Heart left ventricle (tissue), 16 donors: ENCODE measurements at regions of chr14 and their contacts with region 1.

Region 1: DNA sequence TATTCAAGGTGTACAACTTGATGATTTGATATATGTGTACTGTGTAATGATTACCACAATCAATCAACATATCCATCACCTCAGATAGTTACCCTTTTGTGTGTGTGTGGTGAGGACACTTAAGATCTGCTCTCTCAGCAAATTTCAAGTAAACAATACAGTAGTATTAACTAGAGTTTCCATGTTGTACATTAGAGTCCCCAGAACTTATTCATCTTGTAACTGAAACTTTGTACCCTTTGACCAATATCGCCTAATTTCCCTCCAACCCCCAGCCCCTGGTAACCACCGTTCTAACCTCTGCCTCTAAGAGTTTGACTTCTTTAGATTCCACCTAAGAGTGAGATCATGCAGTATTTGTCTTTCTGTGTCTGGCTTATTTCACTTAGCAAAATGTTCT is 12.1 kb downstream of the ADCK1 start:
- DNase-seq: no peak
- ATAC-seq: no peak
- H3K4me3 ChIP-seq: no peak overlapping the region
- H3K27ac ChIP-seq: no peak overlapping the region
- H3K4me1 ChIP-seq: no peaks in the 10 kb centered on the region
- H3K27me3 ChIP-seq: no peaks in the 10 kb centered on the region
- CTCF ChIP-seq: no peak
- POLR2A ChIP-seq: no peak

Region 2: DNA sequence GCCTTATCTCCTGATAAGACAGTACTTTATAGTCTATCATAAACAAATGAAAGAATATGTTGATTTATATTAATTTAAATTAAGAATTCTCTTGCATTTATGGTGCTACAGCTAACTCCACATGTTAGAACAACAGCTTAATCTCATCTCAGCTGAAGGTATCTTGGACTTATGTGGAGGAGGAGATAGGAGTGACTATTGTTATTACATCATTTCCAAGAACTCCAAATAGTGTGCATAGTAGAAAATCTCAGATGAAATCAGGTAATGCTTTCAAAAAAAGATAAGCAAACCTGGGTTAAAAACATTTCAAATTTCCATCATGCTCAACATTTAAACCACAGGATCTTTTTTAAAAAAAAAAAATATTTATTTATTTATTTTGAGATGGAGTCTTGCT is 282.1 kb before region 1 on chr14:
- intact Hi-C with region 1: no loop called
- DNase-seq: no peak
- ATAC-seq: no peak
- H3K4me3 ChIP-seq: no peak overlapping the region
- H3K27ac ChIP-seq: no peak overlapping the region
- H3K4me1 ChIP-seq: peaks cover 0 to 4% (median 0%) of the 10 kb centered on the region in 12 donors
- H3K27me3 ChIP-seq: no peaks in the 10 kb centered on the region
- CTCF ChIP-seq: no peak
- POLR2A ChIP-seq: no peak

Region 3: GRCh38 chr14:77659831-77660230 is 152.2 kb before region 1 on chr14:
- intact Hi-C with region 1: loop called in 3 of 10 experiments (anchors 2 to 10 kb)
- DNase-seq: no peak
- ATAC-seq: peak in 2 of 4 donors; percentile 31
- H3K4me3 ChIP-seq: no peak overlapping the region
- H3K27ac ChIP-seq: peak overlapping the region in 1 of 12 donors; percentile 88
- H3K4me1 ChIP-seq: peaks cover 0 to 43% (median 0%) of the 10 kb centered on the region in 12 donors
- H3K27me3 ChIP-seq: no peaks in the 10 kb centered on the region
- CTCF ChIP-seq: no peak
- POLR2A ChIP-seq: no peak

Region 4: GRCh38 chr14:77790566-77791224 is 21.3 kb before region 1 on chr14:
- intact Hi-C with region 1: loop called in 1 of 10 experiments (anchors 1 kb)
- DNase-seq: no peak
- ATAC-seq: peak in 1 of 4 donors; percentile 29
- H3K4me3 ChIP-seq: no peak overlapping the region
- H3K27ac ChIP-seq: no peak overlapping the region
- H3K4me1 ChIP-seq: no peaks in the 10 kb centered on the region
- H3K27me3 ChIP-seq: no peaks in the 10 kb centered on the region
- CTCF ChIP-seq: no peak
- POLR2A ChIP-seq: no peak